GM12878 (cell line): ENCODE measurements at regions of chr13 and their contacts with region 1.

Region 1: GRCh38 chr13:75432045-75432444 is 49.9 kb downstream of the TBC1D4 start:
- DNase-seq: no peak
- ATAC-seq: peak; percentile 40; the same call in 2 of the 3 replicates
- H3K4me3 ChIP-seq: no peak overlapping the region
- H3K27ac ChIP-seq: no peak overlapping the region
- H3K4me1 ChIP-seq: no peaks in the 10 kb centered on the region
- H3K27me3 ChIP-seq: no peaks in the 10 kb centered on the region
- CTCF ChIP-seq: peak in 1 of 3 experiments; percentile 27; a peak in 1 of 6 replicates
- EP300 ChIP-seq: no peak
- POLR2A ChIP-seq: no peak
- RAD21 ChIP-seq: peak; percentile 50; the same call in 1 of the 2 replicates

Region 2: DNA sequence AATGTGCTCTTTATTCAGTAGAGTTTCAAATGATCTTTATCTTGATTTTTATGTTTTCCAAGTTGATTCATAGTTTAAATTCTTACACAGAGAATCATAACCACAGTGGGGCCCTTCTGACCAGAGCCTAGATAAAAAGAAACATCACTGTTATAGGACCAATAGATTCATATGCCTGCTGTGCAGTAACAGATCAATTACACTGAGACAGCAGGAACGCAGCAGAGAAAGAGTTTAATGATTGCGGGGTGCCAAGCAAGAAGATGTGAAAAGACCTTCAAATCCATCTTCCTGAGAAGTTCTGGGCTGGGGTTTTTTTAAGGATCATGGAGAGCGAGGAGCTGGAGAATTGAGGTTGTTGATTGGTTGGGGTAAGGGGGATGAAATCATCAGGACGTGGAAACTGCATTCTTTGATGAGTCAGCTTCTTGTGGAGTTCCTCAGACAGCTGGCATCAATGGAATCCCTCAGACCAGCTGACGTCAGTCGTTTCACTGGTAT is 296.7 kb before region 1 on chr13:
- CTCF ChIA-PET with region 1: no interaction called
- POLR2A ChIA-PET with region 1: no interaction called
- RAD21 ChIA-PET with region 1: no interaction called
- SMC1A ChIA-PET with region 1: no interaction called
- in situ Hi-C with region 1: no loop called
- intact Hi-C with region 1: no loop called
- DNase-seq: no peak
- ATAC-seq: no peak
- H3K4me3 ChIP-seq: no peak overlapping the region
- H3K27ac ChIP-seq: no peak overlapping the region
- H3K4me1 ChIP-seq: no peaks in the 10 kb centered on the region
- H3K27me3 ChIP-seq: no peaks in the 10 kb centered on the region
- CTCF ChIP-seq: no peak
- EP300 ChIP-seq: no peak
- POLR2A ChIP-seq: no peak
- RAD21 ChIP-seq: no peak

Region 3: GRCh38 chr13:75416327-75417005 is 15.6 kb before region 1 on chr13:
- CTCF ChIA-PET with region 1: interaction called, 7 read pairs
- POLR2A ChIA-PET with region 1: no interaction called
- RAD21 ChIA-PET with region 1: no interaction called
- SMC1A ChIA-PET with region 1: interaction called, 12 read pairs
- in situ Hi-C with region 1: no loop called
- intact Hi-C with region 1: no loop called
- DNase-seq: peak; percentile 36
- ATAC-seq: peak; percentile 90
- H3K4me3 ChIP-seq: no peak overlapping the region
- H3K27ac ChIP-seq: peak overlapping the region; percentile 4; the same call in 1 of the 2 replicates
- H3K4me1 ChIP-seq: peaks cover 17% of the 10 kb centered on the region
- H3K27me3 ChIP-seq: no peaks in the 10 kb centered on the region
- CTCF ChIP-seq: peak in 2 of 3 experiments; percentile 18 to 22; a peak in 2 of 6 replicates
- EP300 ChIP-seq: no peak
- POLR2A ChIP-seq: no peak
- RAD21 ChIP-seq: peak; percentile 62

Region 4: DNA sequence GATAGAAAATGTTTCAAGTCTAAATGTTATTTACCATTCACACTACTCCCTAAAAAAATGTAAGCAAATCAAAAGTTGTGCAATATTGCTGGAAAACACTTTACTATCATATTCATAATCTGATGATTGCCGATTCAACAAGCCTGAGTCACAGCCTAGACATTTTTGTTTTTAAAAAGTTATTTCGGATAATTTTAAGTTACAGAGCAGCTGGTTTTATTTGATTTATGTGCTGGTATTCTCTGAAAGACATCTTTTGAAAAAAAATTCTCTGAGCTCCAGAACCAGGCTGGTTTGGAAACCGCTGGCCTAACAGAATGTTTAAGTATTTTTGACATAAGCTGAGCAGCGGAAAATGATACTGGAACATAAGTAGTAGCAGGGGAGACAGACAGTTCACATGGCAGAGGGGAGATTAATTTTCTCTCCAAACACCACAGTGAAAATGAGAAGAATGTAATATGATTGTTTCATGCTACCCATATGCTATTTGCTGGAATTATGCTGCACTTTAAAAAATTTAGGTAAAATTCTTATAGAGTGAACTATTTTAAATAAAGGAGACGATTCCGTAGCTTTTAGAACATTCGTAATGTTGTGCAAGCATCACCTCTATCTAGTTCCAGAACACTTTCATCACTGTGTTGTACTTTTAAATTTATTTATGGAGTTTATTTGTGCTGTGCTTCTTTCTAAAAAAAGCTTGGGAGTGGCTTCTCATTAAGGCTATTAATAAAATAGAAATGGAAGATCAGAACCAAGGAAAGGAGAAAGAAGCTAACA is 13.9 kb after region 1 on chr13:
- CTCF ChIA-PET with region 1: interaction called, 9 read pairs
- POLR2A ChIA-PET with region 1: interaction called, 3 read pairs
- RAD21 ChIA-PET with region 1: no interaction called
- SMC1A ChIA-PET with region 1: interaction called, 18 read pairs
- in situ Hi-C with region 1: no loop called
- intact Hi-C with region 1: no loop called
- DNase-seq: no peak
- ATAC-seq: no peak
- H3K4me3 ChIP-seq: no peak overlapping the region
- H3K27ac ChIP-seq: no peak overlapping the region
- H3K4me1 ChIP-seq: peaks cover 10% of the 10 kb centered on the region
- H3K27me3 ChIP-seq: no peaks in the 10 kb centered on the region
- CTCF ChIP-seq: no peak
- EP300 ChIP-seq: no peak
- POLR2A ChIP-seq: no peak
- RAD21 ChIP-seq: no peak